ENCODE measurements at regions of chr9 and their contacts with region 1.

Region 1: GRCh38 chr9:23172979-23173637 is 652.9 kb downstream of the ELAVL2 start:
- DNase-seq: no peak
- ATAC-seq: no peak
- H3K4me3 Mint-ChIP-seq: no peak overlapping the region
- H3K27ac Mint-ChIP-seq: no peak overlapping the region
- H3K4me1 Mint-ChIP-seq: no peaks in the 10 kb centered on the region
- H3K27me3 Mint-ChIP-seq: no peaks in the 10 kb centered on the region

Region 2: GRCh38 chr9:23123048-23123632 is 50.0 kb before region 1 on chr9:
- CTCF ChIA-PET with region 1: no interaction called
- POLR2A ChIA-PET with region 1: no interaction called
- intact Hi-C with region 1: loop called in 1 of 2 experiments (anchors 1 kb)
- DNase-seq: peak; percentile 18
- ATAC-seq: no peak
- H3K4me3 Mint-ChIP-seq: no peak overlapping the region
- H3K27ac Mint-ChIP-seq: no peak overlapping the region
- H3K4me1 Mint-ChIP-seq: no peaks in the 10 kb centered on the region
- H3K27me3 Mint-ChIP-seq: no peaks in the 10 kb centered on the region

Region 3: GRCh38 chr9:23302281-23302680 is 129.2 kb after region 1 on chr9:
- CTCF ChIA-PET with region 1: no interaction called
- POLR2A ChIA-PET with region 1: no interaction called
- intact Hi-C with region 1: no loop called
- DNase-seq: no peak
- ATAC-seq: no peak
- H3K4me3 Mint-ChIP-seq: no peak overlapping the region
- H3K27ac Mint-ChIP-seq: no peak overlapping the region
- H3K4me1 Mint-ChIP-seq: no peaks in the 10 kb centered on the region
- H3K27me3 Mint-ChIP-seq: no peaks in the 10 kb centered on the region

Region 4: DNA sequence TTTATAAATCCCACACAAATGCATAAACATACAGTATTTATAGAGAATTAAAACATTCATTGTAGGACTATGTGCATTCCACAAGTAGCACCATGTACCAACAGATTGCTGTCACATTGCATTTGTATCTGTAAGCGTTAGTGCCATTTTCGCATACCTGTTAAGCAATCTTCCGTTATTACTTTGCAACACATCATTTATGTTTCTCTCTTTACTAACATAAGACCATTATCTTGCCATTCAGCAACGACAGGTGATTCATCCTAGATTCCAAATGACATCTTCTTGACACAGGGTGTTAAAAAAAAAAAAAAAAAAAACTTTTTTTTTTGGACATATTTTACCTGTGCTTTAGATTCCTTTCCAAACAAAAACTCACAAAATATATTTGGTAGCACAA is 141.1 kb after region 1 on chr9:
- CTCF ChIA-PET with region 1: no interaction called
- POLR2A ChIA-PET with region 1: no interaction called
- intact Hi-C with region 1: no loop called
- DNase-seq: no peak
- ATAC-seq: no peak
- H3K4me3 Mint-ChIP-seq: no peak overlapping the region
- H3K27ac Mint-ChIP-seq: no peak overlapping the region
- H3K4me1 Mint-ChIP-seq: no peaks in the 10 kb centered on the region
- H3K27me3 Mint-ChIP-seq: no peaks in the 10 kb centered on the region

Measured in activated CD4-positive, alpha-beta T cell treated with anti-CD3 and anti-CD28 coated beads for 36 hours (primary cell).